Calu3 (cell line): ENCODE measurements at regions of chr5 and their contacts with region 1.

Region 1: GRCh38 chr5:132363431-132364112 is 5.9 kb upstream of the SLC22A5 start:
- DNase-seq: peak; percentile 43
- H3K4me3 Mint-ChIP-seq: no peak overlapping the region
- H3K27ac Mint-ChIP-seq: peak overlapping the region; percentile 9
- H3K4me1 Mint-ChIP-seq: peaks cover 28% of the 10 kb centered on the region
- H3K27me3 Mint-ChIP-seq: no peaks in the 10 kb centered on the region
- CTCF ChIP-seq: no peak

Region 2: GRCh38 chr5:132327252-132327955 is 36.2 kb before region 1 on chr5:
- CTCF ChIA-PET with region 1: no interaction called
- intact Hi-C with region 1: loop called (anchors 5 kb)
- DNase-seq: no peak
- H3K4me3 Mint-ChIP-seq: no peak overlapping the region
- H3K27ac Mint-ChIP-seq: no peak overlapping the region
- H3K4me1 Mint-ChIP-seq: peaks cover 8% of the 10 kb centered on the region
- H3K27me3 Mint-ChIP-seq: no peaks in the 10 kb centered on the region
- CTCF ChIP-seq: no peak